AG04449 (cell line): ENCODE measurements at regions of chr16 and their contacts with region 1.

Region 1: DNA sequence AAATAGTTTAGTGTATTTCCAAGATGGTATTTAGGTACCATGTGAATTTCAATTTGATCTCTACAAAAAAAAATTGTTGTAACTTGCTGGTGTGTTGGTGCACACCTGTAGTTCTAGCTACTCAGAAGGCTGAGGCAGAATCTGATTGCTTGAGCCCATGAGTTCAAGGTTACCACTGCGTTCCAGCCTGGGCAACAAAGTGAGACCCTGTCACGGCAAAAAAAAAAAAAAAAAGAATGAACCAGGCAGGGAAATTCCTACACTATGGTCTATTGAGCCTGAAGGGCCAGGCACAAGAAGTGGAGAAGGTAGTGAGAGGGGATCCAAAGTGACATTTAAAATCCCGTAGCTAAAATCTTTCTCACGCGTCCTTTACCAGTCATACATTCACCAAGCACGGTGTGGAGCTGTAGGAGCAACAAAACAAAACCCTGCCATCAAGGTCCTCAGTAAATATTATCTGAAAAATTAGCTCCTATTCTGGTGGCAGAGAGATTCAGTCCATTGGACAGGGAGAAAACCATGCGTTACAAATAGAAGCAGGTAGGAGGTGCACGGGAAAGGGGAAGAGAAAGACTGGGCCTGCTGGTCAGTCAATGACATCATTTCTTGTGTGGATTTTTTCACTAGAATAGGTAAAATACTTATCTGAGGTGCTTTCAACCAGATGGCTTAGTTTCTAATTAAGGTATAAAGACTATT is 27.3 kb downstream of the TXNDC11 start:
- DNase-seq: no peak
- H3K4me3 ChIP-seq: no peak overlapping the region
- CTCF ChIP-seq: no peak

Region 2: DNA sequence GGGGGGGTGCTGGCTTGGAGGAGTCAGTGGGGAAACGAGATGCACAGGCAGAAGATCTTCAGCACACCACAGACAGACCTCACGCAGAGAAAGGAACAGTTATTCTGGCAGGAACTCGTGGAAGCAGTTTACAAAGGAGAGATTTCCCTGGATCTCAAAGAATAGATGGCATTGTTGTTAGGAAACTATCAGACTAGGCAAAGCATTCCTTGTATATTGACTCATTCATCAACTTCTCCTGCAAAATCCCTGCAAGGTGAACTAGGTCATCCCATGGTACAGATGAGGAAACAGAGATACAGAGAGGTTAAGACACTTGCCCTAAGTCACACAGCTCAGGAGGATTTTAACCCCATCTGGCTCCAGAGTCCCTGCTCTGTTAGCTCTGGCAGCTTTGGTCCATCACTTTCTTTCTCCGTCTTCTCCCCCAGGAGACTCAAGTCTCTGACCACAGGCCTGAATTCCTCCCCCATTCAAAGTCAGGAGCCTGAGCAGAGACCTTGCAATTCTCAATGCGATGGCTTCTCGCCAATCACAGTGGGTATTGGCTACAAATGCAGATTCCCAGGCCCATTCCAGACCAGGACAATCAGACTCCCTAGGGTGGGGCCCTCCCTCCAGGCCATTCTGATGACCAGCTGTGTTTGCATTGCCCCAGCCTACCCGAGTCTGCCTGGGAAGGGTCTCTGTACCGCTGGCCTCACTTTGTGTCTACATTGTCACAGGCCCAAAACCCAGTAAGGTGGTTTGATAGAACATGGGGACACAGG is 185.0 kb before region 1 on chr16:
- CTCF ChIA-PET with region 1: interaction called, 43 read pairs
- POLR2A ChIA-PET with region 1: no interaction called
- DNase-seq: no peak
- H3K4me3 ChIP-seq: no peak overlapping the region
- CTCF ChIP-seq: no peak

Region 3: DNA sequence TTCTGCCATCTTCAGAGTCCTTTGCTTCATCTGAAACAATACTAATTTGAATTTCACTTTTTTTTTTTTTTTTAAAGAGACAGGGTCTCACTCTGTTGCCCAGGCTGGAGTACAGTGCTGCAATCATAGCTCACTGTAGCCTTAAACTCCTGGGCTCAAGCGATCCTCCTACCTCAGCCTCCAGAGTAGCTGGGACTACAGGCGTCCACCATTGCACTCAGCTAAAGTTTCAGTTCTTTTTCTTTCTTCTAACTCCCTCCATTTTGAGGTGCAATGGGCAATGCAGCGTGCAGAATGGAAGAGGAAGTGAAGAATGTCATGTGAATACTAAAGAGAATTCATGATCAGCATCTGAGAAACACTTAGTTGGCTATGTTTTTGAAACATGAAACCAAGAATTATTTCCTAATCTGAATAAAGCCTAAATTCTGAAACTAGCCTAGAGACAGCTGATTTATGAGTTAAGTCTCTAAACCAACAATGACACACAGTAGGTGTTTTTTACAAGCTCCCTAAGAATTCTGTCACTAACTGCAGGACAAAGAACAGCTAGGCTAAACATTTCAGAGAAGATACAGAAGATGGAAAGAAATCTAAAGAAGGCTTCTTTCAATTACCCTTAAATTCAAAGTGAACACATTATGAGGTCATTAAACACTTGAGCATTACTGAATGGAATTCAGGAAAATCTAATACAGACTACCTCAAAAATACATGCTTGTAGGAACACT is 26.2 kb before region 1 on chr16:
- CTCF ChIA-PET with region 1: interaction called, 33 read pairs
- POLR2A ChIA-PET with region 1: no interaction called
- DNase-seq: no peak
- H3K4me3 ChIP-seq: no peak overlapping the region
- CTCF ChIP-seq: no peak

Region 4: DNA sequence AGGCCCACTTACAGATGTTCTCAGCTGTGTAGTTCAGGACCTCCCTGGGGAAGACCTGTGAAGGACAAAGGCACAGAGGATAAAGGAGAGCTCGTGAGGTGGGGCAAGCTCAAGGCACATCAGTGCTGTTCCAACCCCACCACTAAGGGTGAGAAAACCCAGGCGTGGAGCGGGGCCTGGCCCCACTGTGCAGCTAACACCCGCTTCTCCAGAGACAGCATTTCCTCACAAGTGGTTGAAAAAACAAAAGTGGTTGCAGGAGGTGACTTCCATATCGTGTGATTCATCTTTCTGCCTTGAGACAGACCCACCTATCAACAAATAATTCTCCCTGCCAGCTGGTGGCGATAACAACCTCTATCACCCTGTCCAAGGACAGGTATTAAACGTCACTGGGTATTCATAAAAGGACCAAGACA is 17.1 kb before region 1 on chr16:
- CTCF ChIA-PET with region 1: interaction called, 18 read pairs
- POLR2A ChIA-PET with region 1: interaction called, 3 read pairs
- DNase-seq: no peak
- H3K4me3 ChIP-seq: no peak overlapping the region
- CTCF ChIP-seq: no peak

Region 5: DNA sequence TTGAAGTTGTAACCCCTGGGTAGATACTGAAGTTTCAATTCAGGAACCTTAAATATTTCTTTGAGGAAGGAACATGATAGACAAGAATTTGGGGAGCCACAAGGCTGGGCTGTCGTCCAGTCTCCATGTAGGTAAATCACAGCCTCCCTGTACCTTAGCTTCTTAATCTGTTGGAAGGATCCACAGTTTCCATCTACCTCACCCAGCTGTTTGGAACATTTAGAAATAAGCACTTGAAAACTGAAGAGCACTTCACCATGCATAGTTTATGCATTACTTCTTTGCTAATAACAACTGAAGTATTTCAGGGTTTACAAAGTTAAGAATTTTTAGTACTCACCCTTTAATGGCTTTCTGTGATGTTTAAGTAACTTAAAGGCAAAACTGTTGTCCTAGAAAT is 10.1 kb after region 1 on chr16:
- CTCF ChIA-PET with region 1: interaction called, 38 read pairs
- POLR2A ChIA-PET with region 1: no interaction called
- DNase-seq: no peak
- H3K4me3 ChIP-seq: no peak overlapping the region
- CTCF ChIP-seq: no peak

Region 6: DNA sequence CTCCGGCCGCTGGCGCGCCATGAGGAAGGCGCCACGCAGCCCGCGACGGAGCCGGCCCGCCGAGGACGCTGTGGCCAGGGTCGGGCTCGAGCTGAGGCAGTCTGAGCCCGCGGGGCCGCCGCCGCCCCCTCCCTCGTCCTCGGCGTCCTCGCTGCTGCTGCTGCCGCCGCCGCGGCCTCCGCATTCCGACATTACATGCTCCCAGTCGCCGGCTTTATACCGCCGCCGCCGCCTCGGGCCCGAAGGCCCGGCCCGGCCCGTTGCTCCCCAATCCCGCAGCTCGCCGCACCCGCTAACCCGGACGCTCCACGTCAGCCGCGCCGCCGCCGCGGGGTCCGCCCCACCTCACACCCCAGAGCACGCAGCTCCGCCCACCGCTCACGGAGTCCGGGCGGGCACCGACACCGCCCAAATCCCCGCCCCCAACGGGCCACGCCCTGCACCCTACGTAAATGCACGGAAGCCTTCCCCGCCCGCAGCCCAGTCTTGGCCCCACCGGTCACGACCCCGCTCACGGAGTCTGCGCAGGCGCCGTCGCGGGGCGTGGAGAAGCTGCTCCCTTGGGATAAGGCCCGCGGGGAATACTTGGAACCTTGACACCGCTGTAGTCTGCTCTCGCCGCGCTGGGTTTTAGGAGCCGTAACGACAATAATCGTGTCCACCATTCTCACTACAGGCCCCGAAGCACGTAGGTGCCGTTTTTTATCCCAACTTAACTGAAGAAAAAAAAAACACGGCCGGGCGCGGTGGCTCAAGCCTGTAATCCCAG is 27.3 kb after region 1 on chr16 and contains the start of gene TXNDC11:
- CTCF ChIA-PET with region 1: interaction called, 23 read pairs
- POLR2A ChIA-PET with region 1: no interaction called
- DNase-seq: peak; percentile 83
- H3K4me3 ChIP-seq: peak within 1 kb of the TSS; percentile 85
- CTCF ChIP-seq: no peak

Region 7: DNA sequence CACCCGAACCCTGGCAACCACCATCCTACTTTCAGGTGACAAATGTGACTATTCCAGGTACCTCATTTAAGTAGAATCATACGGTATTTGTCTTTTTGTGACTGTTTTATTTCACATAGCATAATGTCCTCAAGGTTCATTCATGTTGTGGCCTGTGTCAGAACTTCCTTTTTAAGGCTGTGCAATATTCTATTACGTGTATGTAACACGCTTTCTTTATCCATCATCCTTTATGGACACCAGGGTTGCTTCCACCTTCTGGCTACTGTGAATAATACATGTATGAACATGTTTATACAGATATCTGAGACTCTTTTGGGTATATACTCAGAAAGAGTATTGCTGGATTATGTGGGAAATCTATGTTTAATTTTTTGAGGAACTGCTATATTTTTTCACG is 164.6 kb after region 1 on chr16:
- CTCF ChIA-PET with region 1: no interaction called
- POLR2A ChIA-PET with region 1: no interaction called
- DNase-seq: no peak
- H3K4me3 ChIP-seq: no peak overlapping the region
- CTCF ChIP-seq: no peak